ENCODE measurements at regions of chr2 and their contacts with region 1.

Region 1: DNA sequence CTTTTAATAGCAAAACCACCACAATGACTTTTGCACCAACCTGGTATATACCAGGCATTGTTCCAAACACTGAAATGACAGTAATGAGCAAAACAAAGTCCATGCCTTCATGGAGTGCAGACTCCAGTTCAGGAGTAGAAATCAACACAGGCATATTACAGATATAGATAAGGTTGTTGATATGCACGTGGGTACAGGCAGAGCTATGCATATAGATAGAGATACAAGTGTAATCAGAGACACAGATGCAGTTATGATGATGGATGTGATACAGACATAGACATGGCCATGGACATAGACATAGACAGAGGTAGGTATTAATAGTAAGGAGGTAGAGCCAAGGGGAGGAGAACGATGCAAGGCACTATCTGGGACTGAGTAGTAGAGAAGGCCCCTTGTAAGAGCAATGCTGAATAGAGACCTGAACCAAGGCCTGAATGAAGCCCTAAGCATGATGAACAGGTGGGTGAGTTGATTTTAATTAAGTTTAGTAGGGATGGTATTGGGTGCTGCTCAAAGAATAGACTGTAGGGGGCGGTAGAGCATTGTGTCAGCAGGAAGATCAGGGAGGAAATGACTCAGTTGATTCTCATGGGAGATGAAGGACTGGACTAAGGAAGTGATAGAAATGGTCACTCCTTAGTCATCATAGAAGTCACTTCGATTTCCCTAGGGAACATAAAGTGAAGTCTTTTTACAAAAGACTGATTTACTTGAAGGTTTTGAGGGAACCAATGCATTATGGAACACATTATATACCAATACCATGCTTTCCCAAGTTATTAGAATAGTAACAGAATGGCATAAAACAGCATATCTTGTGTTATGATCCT is 39.4 kb downstream of the CMPK2 start:
- DNase-seq: peak; percentile 60
- H3K4me3 ChIP-seq: no peak overlapping the region
- H3K27ac ChIP-seq: peak overlapping the region; percentile 52
- H3K4me1 ChIP-seq: peaks cover 12% of the 10 kb centered on the region
- H3K27me3 ChIP-seq: peaks cover 0 to 2% of the 10 kb centered on the region in 2 experiments
- CTCF ChIP-seq: peak; percentile 50 to 69
- POLR2A ChIP-seq: no peak

Region 2: DNA sequence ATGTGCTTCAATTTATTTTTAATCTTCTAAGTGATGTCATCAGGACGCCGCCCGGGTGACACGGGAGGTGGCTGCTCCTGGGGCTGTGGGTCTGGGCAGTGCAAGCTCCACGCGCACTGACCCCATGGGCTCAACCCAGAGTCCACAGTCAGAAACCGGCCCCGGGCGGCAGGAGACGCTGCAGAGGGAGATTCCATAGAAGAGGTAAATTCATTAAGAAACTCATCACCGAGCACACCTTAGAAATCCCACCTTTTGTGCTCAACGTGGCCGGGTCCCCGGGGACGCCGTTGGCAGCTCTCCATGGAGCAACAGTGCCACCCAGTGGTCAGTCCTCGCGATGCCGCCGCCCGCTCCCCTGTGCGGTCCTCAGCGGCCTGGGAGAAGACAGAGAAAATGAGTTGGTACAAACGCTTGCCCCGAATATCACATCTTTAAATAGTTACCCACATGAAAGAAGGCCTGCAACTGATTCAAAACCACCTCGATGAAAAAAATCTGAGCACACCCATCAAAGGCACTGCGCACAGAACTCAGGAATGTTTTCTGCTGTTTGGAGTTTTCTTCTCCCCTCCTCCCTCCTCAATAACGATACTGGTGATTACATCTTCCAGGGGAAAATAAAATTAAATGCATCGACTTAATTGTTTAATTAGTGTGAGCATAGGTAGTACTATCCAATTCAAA is 53.1 kb before region 1 on chr2:
- CTCF ChIA-PET with region 1: no interaction called
- POLR2A ChIA-PET with region 1: no interaction called
- dilution Hi-C with region 1: no loop called
- intact Hi-C with region 1: loop called (anchors 2 kb)
- DNase-seq: peak; percentile 9
- H3K4me3 ChIP-seq: no peak overlapping the region
- H3K27ac ChIP-seq: no peak overlapping the region
- H3K4me1 ChIP-seq: no peaks in the 10 kb centered on the region
- H3K27me3 ChIP-seq: no peaks in the 10 kb centered on the region
- CTCF ChIP-seq: peak; percentile 85 to 86
- POLR2A ChIP-seq: no peak

Region 3: GRCh38 chr2:6780765-6781274 is 45.5 kb before region 1 on chr2:
- CTCF ChIA-PET with region 1: no interaction called
- POLR2A ChIA-PET with region 1: no interaction called
- dilution Hi-C with region 1: no loop called
- intact Hi-C with region 1: loop called (anchors 1 kb)
- DNase-seq: peak; percentile 50
- H3K4me3 ChIP-seq: no peak overlapping the region
- H3K27ac ChIP-seq: peak overlapping the region; percentile 77
- H3K4me1 ChIP-seq: peaks cover 10% of the 10 kb centered on the region
- H3K27me3 ChIP-seq: no peaks in the 10 kb centered on the region
- CTCF ChIP-seq: no peak
- POLR2A ChIP-seq: no peak

Region 4: GRCh38 chr2:6865346-6866274 is 39.3 kb after region 1 on chr2 and contains the start of gene CMPK2:
- CTCF ChIA-PET with region 1: no interaction called
- POLR2A ChIA-PET with region 1: no interaction called
- dilution Hi-C with region 1: no loop called
- intact Hi-C with region 1: loop called (anchors 1 kb)
- DNase-seq: peak; percentile 13
- H3K4me3 ChIP-seq: peak within 1 kb of the TSS; percentile 35 to 55 (median 44)
- H3K27ac ChIP-seq: no peak within 1 kb of the TSS
- H3K4me1 ChIP-seq: peaks cover 4% of the 10 kb centered on the region
- H3K27me3 ChIP-seq: peaks cover 6 to 7% of the 10 kb centered on the region in 2 experiments
- CTCF ChIP-seq: peak in 1 of 2 donors; percentile 12
- POLR2A ChIP-seq: no peak
- total RNA-seq, gene CMPK2: 0.69 and 0.81 TPM in 2 replicates

Region 5: GRCh38 chr2:7044261-7045250 is 218.3 kb after region 1 on chr2:
- CTCF ChIA-PET with region 1: interaction called, 3 read pairs
- POLR2A ChIA-PET with region 1: no interaction called
- dilution Hi-C with region 1: no loop called
- intact Hi-C with region 1: loop called (anchors 1 kb)
- DNase-seq: peak; percentile 64
- H3K4me3 ChIP-seq: no peak overlapping the region
- H3K27ac ChIP-seq: no peak overlapping the region
- H3K4me1 ChIP-seq: peaks cover 7% of the 10 kb centered on the region
- H3K27me3 ChIP-seq: no peaks in the 10 kb centered on the region
- CTCF ChIP-seq: peak; percentile 91 to 92
- POLR2A ChIP-seq: no peak

Region 6: GRCh38 chr2:7083577-7084509 is 257.5 kb after region 1 on chr2:
- CTCF ChIA-PET with region 1: no interaction called
- POLR2A ChIA-PET with region 1: no interaction called
- dilution Hi-C with region 1: no loop called
- intact Hi-C with region 1: loop called (anchors 1 kb)
- DNase-seq: peak; percentile 52
- H3K4me3 ChIP-seq: no peak overlapping the region
- H3K27ac ChIP-seq: no peak overlapping the region
- H3K4me1 ChIP-seq: no peaks in the 10 kb centered on the region
- H3K27me3 ChIP-seq: peaks cover 0 to 2% of the 10 kb centered on the region in 2 experiments
- CTCF ChIP-seq: peak; percentile 57 to 71
- POLR2A ChIP-seq: no peak

Region 7: DNA sequence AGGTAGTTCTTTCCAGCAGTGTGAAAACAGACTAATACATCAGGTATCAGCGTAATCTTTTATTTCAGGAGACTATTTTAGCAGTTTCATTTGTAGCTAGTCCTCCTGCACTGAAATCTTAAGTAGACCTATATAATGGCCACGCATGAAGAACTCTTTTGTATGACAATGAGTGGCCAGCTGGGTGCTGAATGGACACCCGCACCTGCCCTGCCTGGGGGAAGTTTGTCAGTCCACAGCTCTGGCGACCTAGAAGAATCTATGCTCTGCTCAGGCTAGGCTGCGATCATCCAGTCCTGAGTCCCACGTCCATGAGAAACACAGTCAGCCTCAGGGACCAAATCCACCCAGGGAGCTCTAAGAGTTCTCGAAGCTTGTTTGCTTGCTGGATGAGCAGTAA is 1146.4 kb after region 1 on chr2:
- CTCF ChIA-PET with region 1: no interaction called
- POLR2A ChIA-PET with region 1: no interaction called
- dilution Hi-C with region 1: no loop called
- intact Hi-C with region 1: no loop called
- DNase-seq: no peak
- H3K4me3 ChIP-seq: no peak overlapping the region
- H3K27ac ChIP-seq: no peak overlapping the region
- H3K4me1 ChIP-seq: no peaks in the 10 kb centered on the region
- H3K27me3 ChIP-seq: no peaks in the 10 kb centered on the region
- CTCF ChIP-seq: no peak
- POLR2A ChIP-seq: no peak